A673 (cell line): ENCODE measurements at regions of chr13 and their contacts with region 1.

Region 1: GRCh38 chr13:26498656-26499591 is 58.6 kb upstream of the WASF3 start:
- DNase-seq: peak; percentile 42
- H3K4me3 ChIP-seq: no peak overlapping the region
- H3K27ac ChIP-seq: peak overlapping the region; percentile 79
- H3K4me1 ChIP-seq: peaks cover 32% of the 10 kb centered on the region
- H3K27me3 ChIP-seq: no peaks in the 10 kb centered on the region
- CTCF ChIP-seq: no peak

Region 2: DNA sequence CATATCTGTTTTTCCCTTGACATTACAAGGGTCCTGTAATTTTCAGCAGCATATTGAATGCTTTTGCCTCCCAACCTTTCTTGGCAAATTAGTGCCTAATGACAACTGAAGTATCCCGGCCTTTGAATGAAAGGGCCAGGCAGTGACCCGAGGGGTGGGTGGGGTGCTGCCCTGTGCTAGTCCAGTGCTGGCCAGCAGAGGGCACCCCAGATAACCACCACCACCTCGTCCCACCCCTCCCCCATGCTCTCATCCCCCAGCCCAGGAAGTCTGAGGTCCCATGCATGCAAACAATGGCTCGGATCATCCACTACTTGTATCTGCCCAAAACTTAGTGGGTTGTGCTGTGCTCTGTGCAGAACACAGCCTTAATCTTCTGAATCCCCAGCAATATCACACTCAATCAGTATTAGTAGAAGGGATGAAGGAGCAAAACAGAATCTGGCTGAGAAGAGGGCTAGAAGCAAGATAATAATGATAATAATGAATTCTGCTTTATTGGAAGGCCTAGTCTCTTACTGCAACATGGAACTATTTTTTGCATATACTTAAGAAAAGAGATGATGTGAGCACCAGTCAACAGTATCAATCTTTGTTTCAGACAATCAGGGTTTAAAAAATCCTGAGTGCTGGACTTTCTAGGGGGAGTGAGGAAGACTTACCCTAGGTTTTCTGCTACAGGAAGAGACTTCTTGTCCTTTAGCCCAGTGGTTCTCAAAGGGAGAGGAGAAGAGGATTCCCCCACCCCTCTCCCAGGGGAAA is 1814.9 kb before region 1 on chr13:
- CTCF ChIA-PET with region 1: interaction called, 14 read pairs
- POLR2A ChIA-PET with region 1: no interaction called
- intact Hi-C with region 1: no loop called
- DNase-seq: peak; percentile 79
- H3K4me3 ChIP-seq: no peak overlapping the region
- H3K27ac ChIP-seq: peak overlapping the region; percentile 23
- H3K4me1 ChIP-seq: peaks cover 17% of the 10 kb centered on the region
- H3K27me3 ChIP-seq: peaks cover 17% of the 10 kb centered on the region
- CTCF ChIP-seq: peak; percentile 89

Region 3: DNA sequence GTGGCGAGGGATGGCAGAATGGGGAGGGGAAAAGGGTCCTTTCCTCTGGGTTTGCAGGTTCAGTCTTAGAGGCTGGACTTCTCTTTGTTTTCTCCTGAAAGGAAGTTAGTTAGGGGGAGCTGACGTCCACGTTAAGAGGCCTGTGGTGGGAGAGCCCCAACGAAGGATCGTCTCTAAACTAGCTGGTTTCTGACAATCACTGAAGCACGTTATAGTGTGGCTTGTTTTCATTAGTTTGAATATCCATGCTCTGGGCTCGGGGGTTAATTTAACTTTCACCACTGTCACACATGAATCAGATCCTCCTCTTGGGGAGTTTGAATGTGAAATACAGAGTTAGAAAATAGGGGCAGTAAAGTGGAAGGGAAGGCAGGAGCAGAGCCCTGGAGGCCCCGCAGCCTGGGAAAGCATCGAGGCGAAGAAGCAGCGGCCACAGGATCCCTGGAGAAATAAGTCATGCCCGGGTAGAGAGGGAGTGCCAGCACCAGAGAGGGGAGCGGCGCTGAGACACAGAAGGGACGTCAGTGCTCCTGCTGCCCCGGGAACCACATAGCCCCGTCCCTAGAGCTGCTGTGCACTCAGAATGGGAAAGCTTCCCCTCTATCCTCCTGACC is 1295.7 kb before region 1 on chr13:
- CTCF ChIA-PET with region 1: no interaction called
- POLR2A ChIA-PET with region 1: no interaction called
- intact Hi-C with region 1: no loop called
- DNase-seq: no peak
- H3K4me3 ChIP-seq: no peak overlapping the region
- H3K27ac ChIP-seq: no peak overlapping the region
- H3K4me1 ChIP-seq: no peaks in the 10 kb centered on the region
- H3K27me3 ChIP-seq: no peaks in the 10 kb centered on the region
- CTCF ChIP-seq: no peak

Region 4: DNA sequence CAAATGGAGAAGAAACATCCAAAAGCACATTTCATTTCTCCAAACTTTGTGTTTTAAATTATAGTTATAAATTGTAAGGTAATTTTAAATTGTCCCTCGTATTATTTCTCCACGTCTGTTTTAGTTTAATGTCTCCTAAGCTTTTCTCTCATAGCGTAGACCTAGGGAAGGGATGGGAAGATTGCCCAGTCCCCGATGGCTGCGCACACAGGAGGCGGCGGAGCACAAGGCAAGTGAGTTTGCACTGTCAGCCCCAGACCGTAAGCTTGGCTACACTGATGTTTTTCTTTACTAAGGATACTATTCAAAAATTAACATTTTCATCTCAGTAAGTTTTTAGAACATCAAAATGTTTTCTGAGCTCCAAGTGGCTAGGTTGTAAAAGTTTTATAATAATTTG is 189.4 kb after region 1 on chr13:
- CTCF ChIA-PET with region 1: no interaction called
- POLR2A ChIA-PET with region 1: no interaction called
- intact Hi-C with region 1: loop called (anchors 5 kb)
- DNase-seq: peak; percentile 36
- H3K4me3 ChIP-seq: peak overlapping the region; percentile 11
- H3K27ac ChIP-seq: no peak overlapping the region
- H3K4me1 ChIP-seq: no peaks in the 10 kb centered on the region
- H3K27me3 ChIP-seq: no peaks in the 10 kb centered on the region
- CTCF ChIP-seq: no peak